ENCODE measurements at regions of chr17 and their contacts with region 1.

Region 1: DNA sequence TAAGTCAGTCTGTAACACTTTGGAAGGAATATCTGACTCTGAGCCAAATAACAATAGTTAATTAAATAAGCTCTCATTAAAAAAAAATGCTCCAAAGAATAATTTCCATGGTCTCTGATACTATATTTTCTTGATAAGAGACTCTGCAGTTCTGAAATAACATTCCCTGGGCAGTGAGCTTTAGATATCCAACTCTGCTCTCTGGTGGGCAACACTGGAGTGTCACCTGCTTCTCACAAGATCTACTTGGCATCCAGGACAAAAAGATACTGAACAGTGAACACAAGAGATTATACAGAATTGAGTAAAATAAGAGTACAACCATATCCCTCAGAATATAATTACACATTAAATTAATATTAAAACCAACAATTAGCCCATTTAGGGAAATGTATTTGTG is 13.7 kb downstream of the BLMH start:
- DNase-seq: peak; percentile 49
- ATAC-seq: peak; percentile 67; the same call in 2 of the 3 replicates
- H3K4me3 ChIP-seq: no peak overlapping the region
- H3K27ac ChIP-seq: no peak overlapping the region
- H3K4me1 ChIP-seq: no peaks in the 10 kb centered on the region
- H3K27me3 ChIP-seq: no peaks in the 10 kb centered on the region
- CTCF ChIP-seq: peak; percentile 61
- EP300 ChIP-seq: no peak
- POLR2A ChIP-seq: no peak
- RAD21 ChIP-seq: peak; percentile 50; the same call in 1 of the 2 replicates

Region 2: GRCh38 chr17:30104575-30105339 is 173.3 kb before region 1 on chr17:
- CTCF ChIA-PET with region 1: interaction called, 4 read pairs
- POLR2A ChIA-PET with region 1: interaction called, 3 read pairs
- in situ Hi-C with region 1: no loop called
- intact Hi-C with region 1: loop called (anchors 1 kb)
- DNase-seq: peak; percentile 88
- ATAC-seq: peak; percentile 98
- H3K4me3 ChIP-seq: peak overlapping the region; percentile 4 to 56 (median 37)
- H3K27ac ChIP-seq: peak overlapping the region; percentile 59
- H3K4me1 ChIP-seq: peaks cover 21% of the 10 kb centered on the region
- H3K27me3 ChIP-seq: 0 out of 5 replicates have a peak, but pooled peaks cover 0 to 1% of the 10 kb centered on the region in 2 experiments
- CTCF ChIP-seq: peak; percentile 94
- EP300 ChIP-seq: peak in 1 of 2 experiments; percentile 4; a peak in 1 of 4 replicates
- POLR2A ChIP-seq: peak in 1 of 2 experiments; percentile 46; a peak in 1 of 4 replicates
- RAD21 ChIP-seq: peak; percentile 79

Region 3: GRCh38 chr17:30124273-30124796 is 153.7 kb before region 1 on chr17:
- CTCF ChIA-PET with region 1: interaction called, 14 read pairs
- POLR2A ChIA-PET with region 1: no interaction called
- in situ Hi-C with region 1: loop called (anchors 5 kb)
- intact Hi-C with region 1: loop called (anchors 1 kb)
- DNase-seq: no peak
- ATAC-seq: no peak
- H3K4me3 ChIP-seq: no peak overlapping the region
- H3K27ac ChIP-seq: no peak overlapping the region
- H3K4me1 ChIP-seq: peaks cover 24% of the 10 kb centered on the region
- H3K27me3 ChIP-seq: no peaks in the 10 kb centered on the region
- CTCF ChIP-seq: no peak
- EP300 ChIP-seq: no peak
- POLR2A ChIP-seq: no peak
- RAD21 ChIP-seq: no peak

Region 4: DNA sequence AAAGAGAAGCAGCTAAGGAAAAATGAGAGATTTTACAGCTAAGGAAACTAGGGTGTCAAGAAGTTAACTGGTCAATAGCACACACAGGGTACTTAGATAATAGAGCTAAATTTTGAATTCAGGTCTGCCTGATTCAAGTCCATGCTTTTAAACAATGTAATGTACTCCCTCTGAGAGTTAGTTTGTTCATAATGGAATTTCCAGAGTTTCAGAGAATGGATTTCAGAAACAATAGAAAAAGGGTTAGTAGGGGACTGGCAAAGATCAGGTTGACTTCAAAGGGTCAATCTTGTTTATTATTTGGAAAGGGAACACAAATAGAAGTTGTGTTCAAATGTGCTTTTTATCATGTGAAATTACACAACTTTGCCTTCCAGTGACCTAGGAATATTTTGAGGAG is 143.5 kb before region 1 on chr17:
- CTCF ChIA-PET with region 1: no interaction called
- POLR2A ChIA-PET with region 1: no interaction called
- in situ Hi-C with region 1: loop called (anchors 5 kb)
- intact Hi-C with region 1: no loop called
- DNase-seq: no peak
- ATAC-seq: no peak
- H3K4me3 ChIP-seq: no peak overlapping the region
- H3K27ac ChIP-seq: no peak overlapping the region
- H3K4me1 ChIP-seq: no peaks in the 10 kb centered on the region
- H3K27me3 ChIP-seq: no peaks in the 10 kb centered on the region
- CTCF ChIP-seq: no peak
- EP300 ChIP-seq: no peak
- POLR2A ChIP-seq: no peak
- RAD21 ChIP-seq: no peak

Region 5: DNA sequence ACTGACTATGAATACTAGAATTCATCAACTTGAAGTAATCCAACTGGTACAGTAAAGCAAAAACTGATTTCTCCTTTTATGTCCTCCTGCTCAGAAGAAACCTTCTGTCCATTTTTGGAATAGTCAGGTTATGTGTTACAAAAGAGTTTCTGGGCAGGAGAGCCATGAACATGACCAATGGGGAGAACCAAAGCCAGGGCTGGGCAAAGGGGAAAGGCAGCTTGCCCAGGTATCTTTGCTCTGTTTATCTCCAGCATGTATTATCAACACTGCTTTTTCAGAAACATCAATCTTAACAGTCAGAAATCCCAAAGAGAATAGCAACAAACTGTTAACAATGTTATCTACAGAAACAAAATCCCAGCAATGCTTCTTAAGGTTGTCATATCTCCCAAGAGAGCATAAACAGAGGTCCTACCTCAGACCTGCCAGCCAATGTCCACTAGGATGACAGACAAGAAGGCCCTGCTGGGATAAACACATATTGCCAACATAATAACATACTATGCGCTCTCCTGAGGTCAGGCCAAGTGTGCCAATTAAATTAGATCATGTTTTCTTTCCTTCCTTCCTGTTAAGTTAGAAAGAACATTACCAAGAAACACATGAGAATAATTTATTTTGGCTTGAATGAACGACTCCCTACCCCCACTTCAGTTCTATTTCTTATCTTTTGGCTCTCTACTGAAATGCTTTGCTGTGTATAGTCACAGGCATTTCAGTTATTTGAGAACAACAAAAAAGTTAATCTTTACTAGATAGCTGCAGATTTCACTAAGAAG is 14.3 kb before region 1 on chr17:
- CTCF ChIA-PET with region 1: no interaction called
- POLR2A ChIA-PET with region 1: no interaction called
- in situ Hi-C with region 1: no loop called
- intact Hi-C with region 1: no loop called
- DNase-seq: no peak
- ATAC-seq: no peak
- H3K4me3 ChIP-seq: no peak overlapping the region
- H3K27ac ChIP-seq: no peak overlapping the region
- H3K4me1 ChIP-seq: no peaks in the 10 kb centered on the region
- H3K27me3 ChIP-seq: no peaks in the 10 kb centered on the region
- CTCF ChIP-seq: no peak
- EP300 ChIP-seq: no peak
- POLR2A ChIP-seq: no peak
- RAD21 ChIP-seq: no peak

Measured in HepG2 (cell line).